CD4-positive, alpha-beta T cell (primary cell): ENCODE measurements at regions of chr17 and their contacts with region 1.

Region 1: DNA sequence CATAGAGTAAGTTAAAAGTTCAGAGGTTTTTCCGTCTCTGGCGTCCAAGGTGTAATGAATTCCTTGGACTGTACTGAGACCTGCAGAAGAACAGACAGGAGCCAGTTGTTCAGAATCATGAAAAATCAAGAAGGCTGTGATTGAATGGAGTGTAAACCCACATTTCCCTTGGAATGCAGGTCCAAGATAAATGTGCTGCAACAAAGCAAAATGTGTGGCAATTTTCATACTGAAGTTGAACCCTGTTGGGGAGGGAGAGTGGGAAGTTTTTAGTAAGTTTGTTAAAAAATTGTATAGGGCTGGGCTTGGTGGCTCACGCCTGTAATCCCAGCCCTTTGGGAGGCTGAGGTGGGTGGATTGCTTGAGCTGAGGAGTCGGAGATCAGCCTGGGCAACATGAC is 21.4 kb downstream of the GGNBP2 start:
- DNase-seq: no peak
- ATAC-seq: no peak
- H3K4me3 ChIP-seq: no peak overlapping the region
- H3K4me3 Mint-ChIP-seq: no peak overlapping the region
- H3K27ac ChIP-seq: no peak overlapping the region
- H3K27ac Mint-ChIP-seq: no peak overlapping the region
- H3K4me1 ChIP-seq: no peaks in the 10 kb centered on the region
- H3K4me1 Mint-ChIP-seq: peaks cover 21% of the 10 kb centered on the region
- H3K27me3 ChIP-seq: no peaks in the 10 kb centered on the region
- H3K27me3 Mint-ChIP-seq: no peaks in the 10 kb centered on the region
- CTCF ChIP-seq: no peak

Region 2: DNA sequence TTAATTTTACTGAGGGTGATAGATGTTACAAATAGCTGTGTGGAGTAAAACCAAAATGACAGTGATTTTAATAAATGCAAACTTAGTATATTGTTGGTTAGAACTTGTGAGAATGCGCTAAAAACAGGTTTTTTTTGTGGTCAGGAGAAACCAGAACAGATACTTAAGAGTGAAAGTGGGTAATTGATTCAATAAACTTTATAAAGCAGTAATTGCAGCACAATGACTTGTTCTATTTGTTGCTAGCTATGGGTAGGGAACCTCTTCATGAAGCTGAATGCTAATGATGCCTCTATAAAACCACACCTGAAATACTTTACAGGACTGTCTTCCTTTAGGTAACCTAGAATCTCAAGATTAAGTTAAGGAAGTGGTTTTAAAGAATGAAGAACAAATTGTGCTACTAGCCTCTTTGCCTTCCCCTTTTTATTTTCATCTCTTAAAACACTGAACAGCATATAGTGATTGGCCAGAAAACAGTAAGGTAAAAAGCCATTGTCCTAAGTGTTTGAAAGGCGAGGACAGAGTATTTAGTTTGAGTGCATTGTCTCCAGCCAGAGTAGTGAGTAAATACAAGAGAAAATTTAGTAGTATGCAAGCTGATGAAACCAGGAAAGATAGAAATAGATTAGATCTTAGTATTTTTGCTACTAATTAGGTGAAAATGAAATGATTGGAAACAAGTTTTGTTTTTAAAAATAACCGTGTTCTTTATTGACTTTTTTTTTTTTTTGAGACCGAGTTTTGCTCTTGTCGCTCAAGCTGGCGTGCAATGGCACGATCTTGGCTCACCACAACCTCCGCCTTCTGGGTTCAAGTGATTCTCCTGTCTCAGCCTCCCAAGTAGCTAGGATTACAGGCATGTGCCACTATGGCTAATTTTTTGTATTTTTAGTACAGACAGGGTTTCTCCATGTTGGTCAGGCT is 15.3 kb before region 1 on chr17:
- CTCF ChIA-PET with region 1: interaction called, 3 read pairs
- POLR2A ChIA-PET with region 1: interaction called, 16 read pairs
- intact Hi-C with region 1: loop called in 1 of 2 experiments (anchors 2 kb)
- DNase-seq: peak in 3 of 14 experiments; percentile 43 to 57 (median 44)
- ATAC-seq: peak; percentile 50
- H3K4me3 ChIP-seq: no peak overlapping the region
- H3K4me3 Mint-ChIP-seq: peak overlapping the region; percentile 68
- H3K27ac ChIP-seq: no peak overlapping the region
- H3K27ac Mint-ChIP-seq: peak overlapping the region; percentile 61
- H3K4me1 ChIP-seq: peaks cover 44% of the 10 kb centered on the region
- H3K4me1 Mint-ChIP-seq: peaks cover 83% of the 10 kb centered on the region
- H3K27me3 ChIP-seq: no peaks in the 10 kb centered on the region
- H3K27me3 Mint-ChIP-seq: no peaks in the 10 kb centered on the region
- CTCF ChIP-seq: no peak